ENCODE measurements at regions of chr7 and their contacts with region 1.

Region 1: DNA sequence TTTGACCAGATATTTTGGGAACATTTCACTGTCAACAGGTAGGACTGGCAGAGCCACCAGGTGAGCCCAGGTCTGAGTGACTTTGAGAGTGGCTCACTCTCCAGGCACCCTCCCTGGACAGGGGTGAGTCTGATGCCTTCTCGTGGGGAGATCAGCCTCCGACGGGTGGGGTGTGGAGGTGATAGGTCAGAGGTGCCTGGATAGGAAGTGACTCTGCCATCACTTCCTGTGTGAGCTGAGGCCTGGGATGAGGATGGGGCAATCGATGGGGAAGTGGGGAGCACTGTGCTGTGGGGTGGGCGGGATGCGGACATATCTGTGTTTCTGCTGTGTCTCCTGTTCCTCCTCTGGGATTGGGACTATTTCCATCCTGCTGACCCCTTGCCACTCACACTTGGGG is 34.6 kb downstream of the IFT22 start:
- DNase-seq: no peak
- ATAC-seq: no peak
- H3K4me3 ChIP-seq: no peak overlapping the region
- H3K27ac ChIP-seq: no peak overlapping the region
- H3K4me1 ChIP-seq: peaks cover 4% of the 10 kb centered on the region
- H3K27me3 ChIP-seq: no peaks in the 10 kb centered on the region; a peak in 2 of 4 replicates
- CTCF ChIP-seq: no peak
- EP300 ChIP-seq: no peak
- POLR2A ChIP-seq: no peak
- RAD21 ChIP-seq: no peak

Region 2: DNA sequence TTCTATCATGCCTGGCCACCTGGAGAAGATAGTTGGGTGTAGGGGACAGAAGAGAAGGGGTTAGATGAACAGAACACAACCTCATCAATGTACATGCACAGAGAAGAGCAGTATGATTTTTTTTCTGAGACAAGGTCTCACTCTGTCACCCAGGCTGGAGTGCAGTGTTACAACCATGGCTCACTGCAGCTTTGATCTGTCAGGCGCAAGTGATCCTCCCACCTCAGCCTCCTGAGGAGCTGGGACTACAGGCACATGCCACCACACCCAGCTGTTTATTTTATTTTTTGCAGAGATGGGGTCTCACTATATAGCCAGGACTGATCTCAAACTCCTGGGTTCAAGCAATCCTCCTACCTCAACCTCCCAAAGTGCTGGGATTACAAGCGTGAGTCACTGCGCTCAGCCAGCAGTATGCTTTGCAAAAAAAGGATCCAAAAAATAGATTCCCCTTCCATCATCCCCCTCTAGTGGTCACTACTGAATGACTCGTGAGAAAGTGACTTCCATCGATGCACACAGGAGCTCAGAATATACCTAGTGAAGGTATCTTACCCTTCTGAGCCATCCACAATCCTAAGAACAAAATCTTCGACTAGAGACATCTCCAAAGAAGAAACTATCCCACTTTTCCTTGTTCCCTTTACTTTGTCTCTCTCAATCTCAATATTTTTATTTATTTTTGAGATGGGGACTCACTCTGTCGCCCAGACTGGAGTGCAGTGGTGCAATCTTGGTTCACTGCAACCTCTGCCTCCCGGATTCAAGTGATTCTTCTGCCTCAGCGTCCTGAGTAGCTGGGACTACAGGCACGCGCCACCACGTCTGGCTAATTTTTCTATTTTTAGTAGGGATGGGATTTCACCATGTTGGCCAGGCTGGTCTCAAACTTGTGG is 879.5 kb before region 1 on chr7:
- CTCF ChIA-PET with region 1: no interaction called
- POLR2A ChIA-PET with region 1: no interaction called
- RAD21 ChIA-PET with region 1: no interaction called
- SMC1A ChIA-PET with region 1: no interaction called
- in situ Hi-C with region 1: no loop called
- intact Hi-C with region 1: no loop called
- DNase-seq: peak; percentile 66
- ATAC-seq: peak; percentile 98
- H3K4me3 ChIP-seq: no peak overlapping the region
- H3K27ac ChIP-seq: no peak overlapping the region
- H3K4me1 ChIP-seq: peaks cover 7% of the 10 kb centered on the region
- H3K27me3 ChIP-seq: no peaks in the 10 kb centered on the region
- CTCF ChIP-seq: peak; percentile 69 to 82 (median 71)
- EP300 ChIP-seq: no peak
- POLR2A ChIP-seq: no peak
- RAD21 ChIP-seq: peak; percentile 87

Region 3: GRCh38 chr7:101153969-101154692 is 132.9 kb before region 1 on chr7 and contains the start of gene AP1S1:
- CTCF ChIA-PET with region 1: interaction called, 3 read pairs
- POLR2A ChIA-PET with region 1: no interaction called
- RAD21 ChIA-PET with region 1: interaction called, 4 read pairs
- SMC1A ChIA-PET with region 1: interaction called, 3 read pairs
- in situ Hi-C with region 1: loop called (anchors 5 kb)
- intact Hi-C with region 1: no loop called
- DNase-seq: peak; percentile 76
- ATAC-seq: peak; percentile 96
- H3K4me3 ChIP-seq: peak within 1 kb of the TSS; percentile 85
- H3K27ac ChIP-seq: peak within 1 kb of the TSS; percentile 65
- H3K4me1 ChIP-seq: peaks cover 3% of the 10 kb centered on the region; the same call in 1 of the 2 replicates
- H3K27me3 ChIP-seq: no peaks in the 10 kb centered on the region
- CTCF ChIP-seq: no peak
- EP300 ChIP-seq: no peak
- POLR2A ChIP-seq: peak; percentile 62
- RAD21 ChIP-seq: no peak
- polyA plus RNA-seq, gene AP1S1: 2.5 to 7.9 TPM

Region 4: DNA sequence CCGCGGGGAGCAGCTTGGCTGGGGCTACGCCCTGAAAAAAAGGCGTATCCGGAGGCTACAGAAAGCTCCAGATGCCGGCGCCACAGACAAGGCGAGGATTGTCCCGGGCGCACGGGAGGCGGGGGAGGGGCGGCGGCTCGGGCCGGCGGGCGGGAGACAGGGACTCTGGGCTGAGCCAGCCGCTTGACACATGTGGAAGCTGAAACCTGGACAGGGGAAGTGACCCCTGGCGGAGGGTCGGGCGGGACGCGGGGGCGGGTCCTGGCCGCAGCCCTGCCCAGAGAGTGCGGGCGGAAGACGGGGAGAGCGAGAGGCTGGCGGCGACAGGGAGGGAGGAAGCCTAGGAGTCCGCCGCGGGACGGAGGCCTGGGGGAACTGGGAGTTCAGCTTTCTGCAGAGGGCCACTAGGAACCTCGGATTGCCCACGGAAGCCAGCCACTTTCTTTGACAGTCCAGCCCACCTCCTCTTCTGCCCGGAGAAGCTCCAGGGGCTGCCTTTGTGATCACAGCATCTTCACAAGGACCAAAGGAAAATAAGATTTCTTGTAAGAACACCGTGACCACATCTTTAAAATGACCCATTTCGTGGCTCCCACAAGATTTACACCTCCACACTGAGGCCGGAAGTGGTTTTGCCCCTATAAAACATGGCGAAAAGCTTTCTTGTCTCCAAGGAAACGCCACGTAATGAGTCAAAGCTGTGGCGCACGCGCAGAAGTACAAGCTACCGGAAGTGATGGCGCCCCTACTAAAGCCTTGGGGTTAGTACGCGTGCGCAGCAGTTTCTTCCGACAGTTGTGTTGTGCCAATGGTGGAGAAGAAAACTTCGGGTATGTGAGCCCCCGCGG is 69.4 kb before region 1 on chr7 and contains the starts of genes PLOD3 and ZNHIT1:
- CTCF ChIA-PET with region 1: interaction called, 27 read pairs
- POLR2A ChIA-PET with region 1: interaction called, 8 read pairs
- RAD21 ChIA-PET with region 1: interaction called, 14 read pairs
- SMC1A ChIA-PET with region 1: interaction called, 5 read pairs
- in situ Hi-C with region 1: no loop called
- intact Hi-C with region 1: no loop called
- DNase-seq: peak; percentile 96
- ATAC-seq: peak; percentile 92
- H3K4me3 ChIP-seq: peak within 1 kb of the TSS; percentile 88
- H3K27ac ChIP-seq: peak within 1 kb of the TSS; percentile 88
- H3K4me1 ChIP-seq: peaks cover 5% of the 10 kb centered on the region
- H3K27me3 ChIP-seq: no peaks in the 10 kb centered on the region
- CTCF ChIP-seq: peak in 1 of 3 experiments; percentile 5; a peak in 1 of 6 replicates
- EP300 ChIP-seq: no peak
- POLR2A ChIP-seq: peak; percentile 59
- RAD21 ChIP-seq: no peak
- polyA plus RNA-seq, gene PLOD3: 0.53 to 3.2 TPM
- polyA plus RNA-seq, gene ZNHIT1: 3.8 to 14.9 TPM

Region 5: DNA sequence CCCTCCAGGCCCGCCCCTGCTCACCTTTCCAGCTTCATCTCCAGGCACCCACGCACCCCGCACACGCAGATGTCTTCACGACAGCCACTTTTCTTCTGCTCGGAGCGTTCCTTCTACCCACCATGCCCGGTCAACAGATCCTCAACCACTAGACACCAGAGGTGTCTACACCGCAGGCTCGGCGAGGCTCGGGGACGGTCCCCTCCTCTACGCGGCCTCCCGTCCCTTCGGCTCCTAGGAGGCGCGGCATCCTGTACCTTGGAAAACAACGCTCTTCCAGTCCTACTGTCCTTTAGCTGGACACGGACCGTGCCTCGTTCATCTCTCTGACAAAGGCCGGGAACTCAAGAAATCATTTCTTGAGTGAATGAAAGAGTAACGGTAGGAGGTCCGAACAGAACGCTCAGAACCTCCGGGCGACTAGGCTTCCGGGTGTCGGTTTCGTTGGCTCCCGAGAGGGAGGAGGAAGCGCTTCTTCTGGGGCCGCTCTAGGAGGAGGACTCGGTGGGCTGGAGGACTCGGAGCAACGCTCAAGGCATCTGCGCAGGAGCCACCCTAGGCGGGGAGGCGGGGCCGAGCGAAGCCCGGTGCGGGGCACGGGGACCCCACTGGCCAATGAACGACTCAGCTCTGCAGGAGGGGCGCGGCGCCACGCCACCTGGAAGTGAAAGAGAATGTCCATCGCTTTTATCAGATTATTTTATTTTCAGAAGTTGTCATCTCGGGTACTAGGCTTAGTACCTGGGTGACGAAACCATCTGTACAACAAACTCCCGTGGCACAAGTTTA is 35.0 kb before region 1 on chr7:
- CTCF ChIA-PET with region 1: interaction called, 13 read pairs
- POLR2A ChIA-PET with region 1: no interaction called
- RAD21 ChIA-PET with region 1: interaction called, 6 read pairs
- SMC1A ChIA-PET with region 1: interaction called, 5 read pairs
- in situ Hi-C with region 1: no loop called
- intact Hi-C with region 1: no loop called
- DNase-seq: peak; percentile 93
- ATAC-seq: peak; percentile 100
- H3K4me3 ChIP-seq: peak overlapping the region; percentile 78
- H3K27ac ChIP-seq: peak overlapping the region; percentile 89
- H3K4me1 ChIP-seq: peaks cover 7% of the 10 kb centered on the region
- H3K27me3 ChIP-seq: no peaks in the 10 kb centered on the region; a peak in 1 of 4 replicates
- CTCF ChIP-seq: no peak
- EP300 ChIP-seq: no peak
- POLR2A ChIP-seq: peak; percentile 86
- RAD21 ChIP-seq: no peak

Region 6: DNA sequence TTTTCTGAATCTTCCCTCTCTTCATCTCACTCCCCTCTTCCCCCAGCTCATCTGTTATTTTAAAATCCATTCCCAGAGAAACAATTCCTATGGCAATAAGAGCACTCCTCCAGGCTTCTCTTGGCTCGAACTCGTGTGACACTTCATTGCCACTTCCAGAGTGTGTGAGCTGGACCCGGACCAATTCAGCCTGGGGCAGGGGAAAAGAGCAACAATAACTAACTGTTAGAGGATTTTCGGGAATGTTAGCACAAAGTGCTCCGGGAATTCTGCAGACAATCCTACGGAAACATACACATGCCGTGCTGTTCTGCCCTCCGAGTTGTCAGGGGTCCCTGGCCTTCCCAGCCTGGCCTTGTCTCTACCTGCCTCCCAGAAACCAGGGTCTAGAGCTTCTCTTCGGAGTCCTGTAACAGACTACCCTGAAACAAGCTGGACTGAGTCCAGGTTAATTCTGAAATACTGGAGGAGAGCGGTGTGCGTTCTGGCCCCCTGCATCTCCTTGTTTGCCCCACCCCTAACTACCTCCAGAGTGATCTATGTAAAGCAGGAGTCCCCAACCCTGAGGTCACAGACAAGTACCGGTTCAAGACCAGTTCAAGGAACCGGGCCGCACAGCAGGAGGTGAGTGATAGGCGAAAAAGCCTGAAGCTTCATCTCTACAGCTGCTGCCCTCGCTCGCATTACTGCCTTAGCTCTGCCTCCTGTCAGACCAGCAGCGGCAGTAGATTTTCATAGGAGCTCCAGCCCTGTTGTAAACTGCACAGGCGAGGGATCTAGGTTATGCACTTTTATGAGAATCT is 87.0 kb after region 1 on chr7:
- CTCF ChIA-PET with region 1: no interaction called
- POLR2A ChIA-PET with region 1: no interaction called
- RAD21 ChIA-PET with region 1: no interaction called
- SMC1A ChIA-PET with region 1: no interaction called
- in situ Hi-C with region 1: no loop called
- intact Hi-C with region 1: no loop called
- DNase-seq: no peak
- ATAC-seq: no peak
- H3K4me3 ChIP-seq: no peak overlapping the region
- H3K27ac ChIP-seq: no peak overlapping the region
- H3K4me1 ChIP-seq: no peaks in the 10 kb centered on the region
- H3K27me3 ChIP-seq: peaks cover 3 to 4% of the 10 kb centered on the region in 2 experiments; a peak in 2 of 4 replicates
- CTCF ChIP-seq: no peak
- EP300 ChIP-seq: no peak
- POLR2A ChIP-seq: no peak
- RAD21 ChIP-seq: no peak

Region 7: GRCh38 chr7:101390901-101391301 is 103.9 kb after region 1 on chr7:
- CTCF ChIA-PET with region 1: no interaction called
- POLR2A ChIA-PET with region 1: no interaction called
- RAD21 ChIA-PET with region 1: no interaction called
- SMC1A ChIA-PET with region 1: no interaction called
- in situ Hi-C with region 1: no loop called
- intact Hi-C with region 1: no loop called
- DNase-seq: peak; percentile 60
- ATAC-seq: peak; percentile 99
- H3K4me3 ChIP-seq: peak overlapping the region; percentile 9; the same call in 1 of the 2 replicates
- H3K27ac ChIP-seq: peak overlapping the region; percentile 39; the same call in 1 of the 2 replicates
- H3K4me1 ChIP-seq: peaks cover 9% of the 10 kb centered on the region
- H3K27me3 ChIP-seq: no peaks in the 10 kb centered on the region
- CTCF ChIP-seq: no peak
- EP300 ChIP-seq: peak; percentile 60 to 69; a peak in 2 of 4 replicates
- POLR2A ChIP-seq: no peak
- RAD21 ChIP-seq: no peak; the same call in 1 of the 2 replicates

Region 8: GRCh38 chr7:101671371-101672356 is 384.6 kb after region 1 on chr7:
- CTCF ChIA-PET with region 1: no interaction called
- POLR2A ChIA-PET with region 1: no interaction called
- RAD21 ChIA-PET with region 1: no interaction called
- SMC1A ChIA-PET with region 1: no interaction called
- in situ Hi-C with region 1: no loop called
- intact Hi-C with region 1: no loop called
- DNase-seq: no peak
- ATAC-seq: no peak
- H3K4me3 ChIP-seq: no peak overlapping the region
- H3K27ac ChIP-seq: no peak overlapping the region
- H3K4me1 ChIP-seq: no peaks in the 10 kb centered on the region
- H3K27me3 ChIP-seq: no peaks in the 10 kb centered on the region
- CTCF ChIP-seq: no peak
- EP300 ChIP-seq: no peak
- POLR2A ChIP-seq: no peak
- RAD21 ChIP-seq: no peak